Ovary (tissue), 10 donors: ENCODE measurements at regions of chr17 and their contacts with region 1.

Region 1: DNA sequence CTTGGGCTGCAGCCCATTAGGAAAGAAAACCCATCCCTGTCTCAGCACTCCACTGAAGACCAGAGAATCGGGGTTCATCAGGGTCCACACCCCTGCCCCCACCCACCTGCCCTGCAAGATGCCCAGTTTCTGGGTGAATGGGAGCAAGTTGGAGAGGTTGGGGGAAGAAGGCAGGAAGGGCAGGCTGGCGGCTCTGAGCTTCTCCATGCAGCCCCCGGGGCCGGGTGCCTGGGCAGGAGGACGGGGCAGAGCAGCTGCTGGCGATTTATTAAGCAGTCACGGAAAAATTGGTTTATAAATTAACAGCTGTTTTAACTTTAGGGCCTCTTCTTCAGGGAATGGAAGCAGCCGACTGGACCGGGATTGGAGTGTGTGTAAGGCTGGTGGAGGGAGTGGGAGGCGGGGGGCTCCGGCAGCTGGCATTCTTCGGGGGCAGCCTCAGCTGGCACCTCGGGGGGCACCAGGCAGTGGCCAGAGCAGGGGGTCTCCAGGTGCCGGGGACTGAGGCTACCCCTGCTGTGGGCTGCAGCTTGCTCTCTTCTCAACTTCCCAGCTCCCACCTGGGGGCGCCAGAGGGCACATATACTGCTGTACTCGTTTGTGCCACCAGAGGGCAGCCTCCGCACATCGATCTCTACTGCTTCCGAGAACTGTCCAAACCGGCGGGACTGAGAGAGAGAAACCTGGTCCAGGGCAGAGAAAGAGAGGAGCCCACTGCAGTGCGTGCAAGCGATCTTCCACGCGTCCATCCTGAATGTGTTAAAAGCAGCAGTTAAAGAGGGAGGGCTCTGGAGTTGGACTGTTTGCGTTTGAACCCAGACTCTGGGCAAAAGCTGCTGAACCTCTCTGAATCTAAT is 5.0 kb upstream of the PPP1R1B start:
- DNase-seq: peak; percentile 74 to 94 (median 88)
- H3K4me3 ChIP-seq: no peak overlapping the region
- H3K27ac ChIP-seq: no peak overlapping the region
- H3K4me1 ChIP-seq: peaks cover 4% of the 10 kb centered on the region
- H3K27me3 ChIP-seq: no peaks in the 10 kb centered on the region
- CTCF ChIP-seq: peak; percentile 87 to 99 (median 98)
- EP300 ChIP-seq: no peak
- POLR2A ChIP-seq: no peak

Region 2: DNA sequence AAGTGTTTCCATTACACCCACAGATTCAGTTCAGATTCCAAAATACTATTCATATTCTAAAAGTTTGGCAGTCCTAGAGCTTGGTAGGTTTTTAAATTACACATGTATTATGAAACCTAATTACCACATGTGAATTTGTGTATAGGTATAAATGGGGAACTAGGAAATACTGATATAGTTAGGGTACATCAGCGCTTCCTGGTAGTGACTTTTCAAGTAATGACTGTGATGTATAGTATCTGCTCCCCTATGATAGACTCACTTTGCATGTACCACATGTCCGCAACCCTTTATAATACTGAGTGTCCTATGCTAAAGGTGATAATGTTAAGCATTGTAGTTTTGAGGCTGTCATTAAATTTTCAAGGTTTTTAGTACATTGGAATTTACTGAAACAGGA is 137.6 kb before region 1 on chr17:
- intact Hi-C with region 1: no loop called
- DNase-seq: no peak
- H3K4me3 ChIP-seq: no peak overlapping the region
- H3K27ac ChIP-seq: no peak overlapping the region
- H3K4me1 ChIP-seq: peaks cover 3% of the 10 kb centered on the region
- H3K27me3 ChIP-seq: no peaks in the 10 kb centered on the region
- CTCF ChIP-seq: no peak
- EP300 ChIP-seq: no peak
- POLR2A ChIP-seq: no peak

Region 3: DNA sequence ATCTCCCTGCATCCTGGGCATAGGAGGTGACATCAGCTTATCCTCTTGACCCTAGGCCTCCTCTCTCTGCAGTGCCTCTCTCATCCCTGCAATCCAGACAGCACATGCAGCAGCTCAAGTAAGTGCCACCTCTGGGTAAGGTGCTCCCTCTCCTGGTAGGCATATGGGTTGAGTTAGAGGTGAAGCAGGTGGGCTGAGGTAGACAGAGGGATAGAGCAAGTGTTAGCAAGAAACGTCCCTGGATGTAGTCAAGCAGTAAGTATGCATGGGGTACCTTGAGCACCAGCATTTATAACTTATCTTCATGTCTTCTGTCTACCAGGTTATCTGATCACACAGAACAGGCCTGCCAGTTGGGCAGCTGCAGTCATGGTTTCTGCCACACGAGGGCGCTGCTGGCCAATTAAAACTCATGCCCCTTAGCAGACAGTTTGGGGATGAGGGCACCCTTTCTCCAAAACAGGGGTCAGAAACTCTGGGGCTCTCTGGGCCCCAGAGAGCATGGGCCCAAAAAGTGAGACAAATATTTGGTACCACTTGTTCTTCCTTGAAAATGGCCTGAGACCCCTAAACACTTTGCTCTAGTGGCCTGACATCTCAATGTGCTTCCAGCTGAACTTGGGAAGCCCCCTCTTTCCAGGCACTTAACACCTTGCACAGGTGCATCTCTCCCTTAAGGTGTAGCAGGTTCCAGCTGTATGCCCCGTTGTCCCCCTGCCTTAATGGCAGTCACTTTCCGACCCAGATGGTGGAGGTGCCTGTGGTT is 73.9 kb before region 1 on chr17:
- intact Hi-C with region 1: loop called in 1 of 4 experiments (anchors 10 kb)
- DNase-seq: peak in 4 of 5 donors; percentile 42 to 66 (median 58)
- H3K4me3 ChIP-seq: no peak overlapping the region
- H3K27ac ChIP-seq: no peak overlapping the region
- H3K4me1 ChIP-seq: no peaks in the 10 kb centered on the region
- H3K27me3 ChIP-seq: no peaks in the 10 kb centered on the region
- CTCF ChIP-seq: peak; percentile 38 to 48 (median 43)
- EP300 ChIP-seq: no peak
- POLR2A ChIP-seq: no peak

Region 4: GRCh38 chr17:39564211-39564848 is 57.4 kb before region 1 on chr17:
- intact Hi-C with region 1: no loop called
- DNase-seq: no peak
- H3K4me3 ChIP-seq: no peak overlapping the region
- H3K27ac ChIP-seq: no peak overlapping the region
- H3K4me1 ChIP-seq: peaks cover 3% of the 10 kb centered on the region
- H3K27me3 ChIP-seq: no peaks in the 10 kb centered on the region
- CTCF ChIP-seq: no peak
- EP300 ChIP-seq: no peak
- POLR2A ChIP-seq: no peak

Region 5: GRCh38 chr17:39668199-39668966 is 46.6 kb after region 1 on chr17 and contains the start of gene PNMT:
- intact Hi-C with region 1: loop called in 2 of 4 experiments (anchors 5 kb)
- DNase-seq: peak; percentile 62 to 81 (median 65)
- H3K4me3 ChIP-seq: peak within 1 kb of the TSS; percentile 32
- H3K27ac ChIP-seq: no peak within 1 kb of the TSS
- H3K4me1 ChIP-seq: peaks cover 4% of the 10 kb centered on the region
- H3K27me3 ChIP-seq: no peaks in the 10 kb centered on the region
- CTCF ChIP-seq: peak in 2 of 3 donors; percentile 64 to 65
- EP300 ChIP-seq: no peak
- POLR2A ChIP-seq: no peak
- total RNA-seq, gene PNMT: 0.60 to 5.1 (median 1.4) TPM in 6 of 7 donors, not detected in the other

Region 6: GRCh38 chr17:39699818-39700147 is 78.0 kb after region 1 on chr17 and contains the start of gene ERBB2:
- intact Hi-C with region 1: no loop called
- DNase-seq: peak; percentile 62 to 75 (median 74)
- H3K4me3 ChIP-seq: peak within 1 kb of the TSS; percentile 70
- H3K27ac ChIP-seq: peak within 1 kb of the TSS; percentile 45 to 53
- H3K4me1 ChIP-seq: peaks cover 9% of the 10 kb centered on the region
- H3K27me3 ChIP-seq: no peaks in the 10 kb centered on the region
- CTCF ChIP-seq: no peak
- EP300 ChIP-seq: no peak
- POLR2A ChIP-seq: peak; percentile 27
- total RNA-seq, gene ERBB2: 26.1 to 66.3 (median 53.5) TPM

Region 7: GRCh38 chr17:39754161-39754951 is 132.6 kb after region 1 on chr17:
- intact Hi-C with region 1: loop called (anchors 5 kb)
- DNase-seq: peak; percentile 82 to 92 (median 88)
- H3K4me3 ChIP-seq: peak overlapping the region; percentile 83
- H3K27ac ChIP-seq: peak overlapping the region; percentile 61 to 93
- H3K4me1 ChIP-seq: no peaks in the 10 kb centered on the region
- H3K27me3 ChIP-seq: no peaks in the 10 kb centered on the region
- CTCF ChIP-seq: peak; percentile 95 to 98 (median 97)
- EP300 ChIP-seq: no peak
- POLR2A ChIP-seq: no peak

Region 8: GRCh38 chr17:39769974-39770587 is 148.3 kb after region 1 on chr17:
- intact Hi-C with region 1: no loop called
- DNase-seq: no peak
- H3K4me3 ChIP-seq: no peak overlapping the region
- H3K27ac ChIP-seq: no peak overlapping the region
- H3K4me1 ChIP-seq: no peaks in the 10 kb centered on the region
- H3K27me3 ChIP-seq: no peaks in the 10 kb centered on the region
- CTCF ChIP-seq: no peak
- EP300 ChIP-seq: no peak
- POLR2A ChIP-seq: no peak